ENCODE measurements at regions of chr9 and their contacts with region 1.

Region 1: DNA sequence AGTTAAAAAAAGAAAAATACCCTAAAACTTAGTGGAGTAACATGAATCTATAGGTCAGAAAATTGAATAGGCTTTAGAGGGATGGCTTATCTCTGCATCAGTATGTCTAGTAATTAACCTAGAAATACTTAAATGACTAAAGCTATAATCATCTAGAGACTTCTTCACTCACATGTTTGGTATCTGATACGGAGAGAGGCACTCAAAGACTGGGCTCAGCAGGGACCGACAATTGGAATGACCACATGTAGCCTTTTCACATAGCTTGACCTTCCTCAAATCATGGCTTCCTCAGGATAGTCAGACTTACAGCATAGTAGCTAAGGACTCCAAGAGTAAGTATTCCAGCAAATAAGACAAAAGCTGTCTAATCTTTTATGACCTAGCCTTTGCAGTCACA is 105.3 kb upstream of the RORB start:
- DNase-seq: no peak
- H3K4me3 Mint-ChIP-seq: no peak overlapping the region
- H3K27ac Mint-ChIP-seq: no peak overlapping the region
- H3K4me1 Mint-ChIP-seq: no peaks in the 10 kb centered on the region
- H3K27me3 Mint-ChIP-seq: no peaks in the 10 kb centered on the region

Region 2: DNA sequence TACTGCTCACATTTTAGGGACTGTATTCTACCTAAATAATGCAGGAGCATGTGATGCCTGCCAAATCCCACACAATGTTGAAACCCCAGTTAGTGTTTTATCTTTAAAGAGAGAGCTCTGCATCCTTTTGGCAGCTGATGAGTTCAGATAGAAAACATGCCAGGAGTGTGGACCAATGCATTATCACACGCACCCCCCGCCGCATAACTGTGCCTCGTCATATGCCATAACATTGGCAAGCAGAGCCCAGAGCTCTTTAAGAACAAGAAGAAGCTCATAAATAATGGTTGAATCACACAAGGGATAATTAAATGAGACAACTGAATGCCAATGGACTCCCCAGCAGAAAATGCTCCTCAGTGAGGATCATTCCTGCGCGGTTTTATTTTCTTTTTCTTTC is 52.6 kb after region 1 on chr9:
- CTCF ChIA-PET with region 1: no interaction called
- intact Hi-C with region 1: loop called (anchors 10 kb)
- DNase-seq: no peak
- H3K4me3 Mint-ChIP-seq: no peak overlapping the region
- H3K27ac Mint-ChIP-seq: no peak overlapping the region
- H3K4me1 Mint-ChIP-seq: no peaks in the 10 kb centered on the region
- H3K27me3 Mint-ChIP-seq: no peaks in the 10 kb centered on the region

Region 3: GRCh38 chr9:74753650-74754049 is 361.8 kb after region 1 on chr9:
- CTCF ChIA-PET with region 1: no interaction called
- intact Hi-C with region 1: no loop called
- DNase-seq: no peak
- H3K4me3 Mint-ChIP-seq: no peak overlapping the region
- H3K27ac Mint-ChIP-seq: no peak overlapping the region
- H3K4me1 Mint-ChIP-seq: no peaks in the 10 kb centered on the region
- H3K27me3 Mint-ChIP-seq: no peaks in the 10 kb centered on the region

Measured in activated naive CD4-positive, alpha-beta T cell treated with anti-CD3 and anti-CD28 coated beads for 36 hours (primary cell).